ENCODE measurements at regions of chr14 and their contacts with region 1.

Region 1: DNA sequence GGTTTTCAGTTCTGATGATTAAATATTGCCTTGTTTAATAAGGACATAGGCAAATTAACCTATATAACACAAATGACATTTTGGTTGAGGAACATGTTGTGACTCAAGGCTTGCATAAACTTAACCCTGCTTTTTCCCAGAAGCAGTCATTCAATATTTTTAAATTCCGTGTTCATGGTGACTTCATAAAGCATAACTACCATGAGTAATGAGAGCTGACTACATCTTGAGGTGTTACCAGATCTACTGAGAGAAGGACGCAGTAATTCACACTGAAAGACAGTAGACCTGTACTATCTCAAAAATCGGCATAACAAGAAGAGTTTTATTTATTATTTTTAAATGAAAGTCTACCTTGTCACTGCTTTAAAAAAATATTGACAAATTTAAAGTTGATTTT is 1198.7 kb downstream of the FSCB start:
- DNase-seq: no peak
- H3K4me3 Mint-ChIP-seq: no peak overlapping the region
- H3K27ac Mint-ChIP-seq: no peak overlapping the region
- H3K4me1 Mint-ChIP-seq: no peaks in the 10 kb centered on the region
- H3K27me3 Mint-ChIP-seq: no peaks in the 10 kb centered on the region

Region 2: DNA sequence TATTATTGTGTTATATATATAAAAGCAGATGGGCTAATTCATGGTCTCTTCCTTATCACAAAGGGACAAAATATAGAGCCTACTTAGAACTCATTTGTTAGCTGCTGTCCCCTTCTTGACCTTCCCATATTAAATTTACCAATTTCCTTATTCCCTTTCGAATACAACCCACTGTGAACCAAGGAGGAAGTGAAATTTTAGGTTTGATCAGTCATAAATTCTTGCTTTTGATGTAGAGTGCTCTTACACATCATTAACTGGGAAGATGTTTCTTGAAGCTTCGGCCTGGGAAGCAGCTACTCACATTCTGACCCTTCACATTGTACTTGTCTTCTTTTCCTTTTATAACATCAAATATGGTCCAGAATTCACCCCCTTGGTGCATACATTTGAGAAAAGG is 1122.7 kb before region 1 on chr14:
- CTCF ChIA-PET with region 1: no interaction called
- intact Hi-C with region 1: loop called (anchors 5 kb)
- DNase-seq: no peak
- H3K4me3 Mint-ChIP-seq: no peak overlapping the region
- H3K27ac Mint-ChIP-seq: no peak overlapping the region
- H3K4me1 Mint-ChIP-seq: no peaks in the 10 kb centered on the region
- H3K27me3 Mint-ChIP-seq: no peaks in the 10 kb centered on the region